ENCODE measurements at regions of chr2 and their contacts with region 1.

Region 1: GRCh38 chr2:227237786-227238185 is 73.4 kb downstream of the COL4A3 start:
- DNase-seq: no peak
- ATAC-seq: no peak

Region 2: DNA sequence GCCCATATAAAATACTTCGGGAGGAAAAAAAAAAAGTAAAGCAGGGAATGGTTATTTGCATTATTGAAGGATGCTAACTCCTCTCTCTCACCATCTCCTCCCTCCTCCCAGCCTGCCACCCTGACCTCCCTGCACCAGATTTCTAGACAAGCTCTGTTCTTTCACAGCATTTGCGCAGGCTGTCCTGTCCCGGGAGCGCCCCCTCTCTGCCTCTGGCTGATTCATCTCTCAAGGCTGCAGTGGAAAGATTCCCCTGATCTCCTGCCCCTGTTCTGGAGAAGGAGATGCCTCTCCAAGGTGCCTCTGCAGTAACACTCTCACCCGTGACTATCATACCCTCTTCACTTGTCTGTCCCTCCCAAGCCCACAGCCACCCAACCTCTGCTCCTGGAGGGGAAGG is 112.3 kb before region 1 on chr2:
- intact Hi-C with region 1: loop called (anchors 2 kb)
- DNase-seq: no peak
- ATAC-seq: no peak

Measured in left ventricle myocardium superior (tissue), 1 donor.